ENCODE measurements at regions of chr11 and their contacts with region 1.

Region 1: GRCh38 chr11:78045851-78046485 is 17.7 kb upstream of the THRSP start:
- DNase-seq: peak; percentile 75 to 92 (median 82)
- H3K4me3 ChIP-seq: peak overlapping the region; percentile 33 to 79 (median 67)
- H3K27ac ChIP-seq: peak overlapping the region in 58 of 59 donors; percentile 33 to 92 (median 84)
- H3K27me3 ChIP-seq: no peaks in the 10 kb centered on the region
- CTCF ChIP-seq: peak; percentile 82 to 100 (median 98)

Region 2: GRCh38 chr11:77589521-77590193 is 456.3 kb before region 1 on chr11 and contains the start of gene AQP11:
- intact Hi-C with region 1: loop called in 1 of 2 experiments (anchors 5 kb)
- DNase-seq: peak; percentile 57 to 89 (median 72)
- H3K4me3 ChIP-seq: peak within 1 kb of the TSS; percentile 63 to 94 (median 82)
- H3K27ac ChIP-seq: peak within 1 kb of the TSS; percentile 34 to 95 (median 86)
- H3K27me3 ChIP-seq: no peaks in the 10 kb centered on the region
- CTCF ChIP-seq: peak in 32 of 56 donors; percentile 0 to 67 (median 41)
- total RNA-seq, gene AQP11: 3.0 to 10.0 (median 6.8) TPM

Region 3: GRCh38 chr11:77820563-77821348 is 225.2 kb before region 1 on chr11 and contains the starts of genes AAMDC and RSF1:
- intact Hi-C with region 1: loop called (anchors 2 kb)
- DNase-seq: peak; percentile 96 to 99 (median 99)
- H3K4me3 ChIP-seq: peak within 1 kb of the TSS; percentile 73 to 100 (median 96)
- H3K27ac ChIP-seq: peak within 1 kb of the TSS; percentile 89 to 99 (median 98)
- H3K27me3 ChIP-seq: no peaks in the 10 kb centered on the region
- CTCF ChIP-seq: peak in 55 of 56 donors; percentile 57 to 92 (median 76)
- total RNA-seq, gene AAMDC: 5.4 to 28.0 (median 14.8) TPM
- total RNA-seq, gene RSF1: 75.5 to 116 (median 94.3) TPM

Region 4: GRCh38 chr11:78212586-78213371 is 166.8 kb after region 1 on chr11:
- intact Hi-C with region 1: no loop called
- DNase-seq: peak in 7 of 10 donors; percentile 48 to 75 (median 54)
- H3K4me3 ChIP-seq: no peak overlapping the region
- H3K27ac ChIP-seq: peak overlapping the region in 56 of 59 donors; percentile 13 to 82 (median 67)
- H3K27me3 ChIP-seq: no peaks in the 10 kb centered on the region
- CTCF ChIP-seq: no peak

Measured in dorsolateral prefrontal cortex (tissue), 120 donors.